Ovary (tissue), 10 donors: ENCODE measurements at regions of chr4 and their contacts with region 1.

Region 1: DNA sequence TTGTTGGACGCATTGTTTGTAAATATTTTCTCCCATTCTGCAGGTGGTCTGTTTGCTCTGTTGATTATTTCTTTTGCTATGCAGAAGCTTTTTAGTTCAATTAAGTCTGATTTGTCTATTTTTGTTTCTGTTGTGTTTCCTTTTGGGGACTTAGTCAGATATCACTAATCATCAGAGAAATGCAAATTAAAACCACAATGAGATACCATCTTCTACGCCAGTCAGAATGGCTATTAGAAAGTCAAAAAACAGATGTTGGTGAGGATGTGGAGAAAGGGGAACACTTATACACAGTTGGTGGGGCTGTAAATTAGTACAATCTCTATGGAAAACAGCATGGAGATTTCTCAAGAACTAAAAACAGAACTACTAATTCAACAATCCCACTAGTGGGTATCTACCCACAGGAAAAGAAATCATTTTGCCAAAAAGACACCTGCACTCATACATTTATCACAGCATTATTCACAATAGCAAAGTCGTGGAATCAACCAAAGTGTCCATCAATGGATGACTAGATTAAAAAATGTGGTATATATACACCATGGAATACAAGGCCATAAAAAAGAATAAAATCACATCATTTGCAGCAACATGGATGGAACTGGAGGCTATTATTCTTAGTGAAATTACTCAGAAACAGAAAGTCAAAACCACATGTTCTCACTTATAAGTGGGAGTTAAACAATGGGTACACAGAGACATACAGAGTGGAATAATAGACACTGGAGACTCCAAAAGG is 8.1 kb downstream of the COQ2 start:
- DNase-seq: no peak
- H3K4me3 ChIP-seq: no peak overlapping the region
- H3K27ac ChIP-seq: no peak overlapping the region
- H3K4me1 ChIP-seq: no peaks in the 10 kb centered on the region
- H3K27me3 ChIP-seq: no peaks in the 10 kb centered on the region
- CTCF ChIP-seq: no peak
- EP300 ChIP-seq: no peak
- POLR2A ChIP-seq: no peak

Region 2: DNA sequence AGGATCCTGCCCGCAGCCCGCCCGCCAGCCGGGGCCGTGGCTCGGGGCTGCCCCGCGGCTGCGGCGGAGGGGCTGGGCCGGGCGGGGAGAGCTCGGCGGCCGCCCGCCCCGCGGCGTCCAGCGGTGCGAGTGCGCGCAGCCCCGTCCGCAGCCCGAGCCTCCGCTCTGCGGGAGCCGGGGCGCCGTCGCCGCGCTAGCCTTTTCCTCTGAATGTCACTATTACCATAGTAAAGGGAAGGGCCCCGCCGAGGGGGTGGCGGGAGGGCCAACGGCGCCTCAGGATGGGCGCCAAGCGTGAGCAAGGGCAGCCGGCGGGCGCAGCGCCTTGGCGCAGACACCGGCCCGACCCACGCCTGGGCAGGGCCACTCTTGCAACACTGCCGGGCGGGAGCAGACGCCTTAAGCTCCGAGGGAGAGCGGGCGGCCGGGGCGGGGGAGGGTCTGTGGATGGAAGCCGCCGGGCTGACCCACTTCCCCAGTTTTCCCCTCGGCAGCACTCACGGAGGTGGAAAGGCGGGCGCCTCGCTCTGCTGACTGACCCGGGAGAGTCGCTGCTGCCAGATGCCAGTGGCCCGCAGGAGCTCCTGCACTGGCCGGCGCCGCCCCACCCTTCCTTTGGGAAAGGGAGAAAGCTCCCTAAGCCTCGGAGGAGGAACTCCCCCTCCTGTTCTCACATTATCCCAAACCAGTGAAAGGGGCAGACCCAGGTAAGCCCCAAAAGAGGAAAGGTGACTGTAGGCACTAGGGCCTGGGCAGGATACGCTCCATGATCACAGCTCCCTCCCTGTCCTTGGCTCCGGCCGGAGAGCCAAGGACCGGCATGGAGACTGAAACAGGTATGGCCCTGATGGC is 1232.1 kb before region 1 on chr4:
- intact Hi-C with region 1: no loop called
- DNase-seq: peak; percentile 28 to 71 (median 55)
- H3K4me3 ChIP-seq: peak overlapping the region; percentile 26
- H3K27ac ChIP-seq: no peak overlapping the region
- H3K4me1 ChIP-seq: peaks cover 4% of the 10 kb centered on the region
- H3K27me3 ChIP-seq: no peaks in the 10 kb centered on the region
- CTCF ChIP-seq: no peak
- EP300 ChIP-seq: no peak
- POLR2A ChIP-seq: no peak

Region 3: GRCh38 chr4:83083925-83084475 is 192.5 kb before region 1 on chr4:
- intact Hi-C with region 1: loop called in 1 of 4 experiments (anchors 10 kb)
- DNase-seq: no peak
- H3K4me3 ChIP-seq: no peak overlapping the region
- H3K27ac ChIP-seq: no peak overlapping the region
- H3K4me1 ChIP-seq: no peaks in the 10 kb centered on the region
- H3K27me3 ChIP-seq: no peaks in the 10 kb centered on the region
- CTCF ChIP-seq: no peak
- EP300 ChIP-seq: no peak
- POLR2A ChIP-seq: no peak

Region 4: GRCh38 chr4:83138946-83139345 is 137.5 kb before region 1 on chr4:
- intact Hi-C with region 1: no loop called
- DNase-seq: no peak
- H3K4me3 ChIP-seq: no peak overlapping the region
- H3K27ac ChIP-seq: no peak overlapping the region
- H3K4me1 ChIP-seq: no peaks in the 10 kb centered on the region
- H3K27me3 ChIP-seq: no peaks in the 10 kb centered on the region
- CTCF ChIP-seq: no peak
- EP300 ChIP-seq: no peak
- POLR2A ChIP-seq: no peak